H1 (cell line): ENCODE measurements at regions of chr22 and their contacts with region 1.

Region 1: GRCh38 chr22:17095538-17095937 is 10.7 kb downstream of the IL17RA start:
- DNase-seq: no peak
- H3K4me3 ChIP-seq: no peak overlapping the region
- H3K27ac ChIP-seq: no peak overlapping the region
- H3K4me1 ChIP-seq: 0 out of 7 replicates have a peak, but pooled peaks cover 0 to 2% (median 0%) of the 10 kb centered on the region in 4 experiments
- H3K27me3 ChIP-seq: no peaks in the 10 kb centered on the region
- CTCF ChIP-seq: peak; percentile 65 to 70 (median 68)
- EP300 ChIP-seq: no peak
- POLR2A ChIP-seq: no peak
- RAD21 ChIP-seq: peak; percentile 34 to 53; a peak in 3 of 4 replicates

Region 2: GRCh38 chr22:16989915-16990314 is 105.6 kb before region 1 on chr22:
- CTCF ChIA-PET with region 1: no interaction called
- POLR2A ChIA-PET with region 1: no interaction called
- DNase-seq: no peak
- H3K4me3 ChIP-seq: no peak overlapping the region
- H3K27ac ChIP-seq: no peak overlapping the region
- H3K4me1 ChIP-seq: no peaks in the 10 kb centered on the region
- H3K27me3 ChIP-seq: no peaks in the 10 kb centered on the region
- CTCF ChIP-seq: no peak
- EP300 ChIP-seq: no peak
- POLR2A ChIP-seq: no peak
- RAD21 ChIP-seq: no peak

Region 3: DNA sequence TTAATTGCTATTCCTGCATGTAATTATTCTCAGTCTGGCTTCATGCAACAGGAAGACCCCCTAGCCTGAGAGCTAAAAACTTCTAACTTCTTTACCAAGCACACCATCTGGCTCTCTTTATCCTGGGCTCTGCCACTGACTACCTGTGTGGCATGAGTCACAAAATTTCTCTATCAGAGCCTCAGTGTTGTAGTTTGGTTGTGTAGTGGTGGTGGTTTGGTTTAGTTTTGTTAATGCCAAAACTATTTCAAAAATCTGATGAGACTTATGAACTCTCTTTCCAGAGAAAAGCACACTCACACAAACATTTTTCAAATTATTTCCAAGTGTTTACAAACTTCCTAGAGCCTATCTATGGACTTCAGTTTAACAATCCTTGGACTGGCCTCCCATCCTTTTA is 18.3 kb before region 1 on chr22:
- CTCF ChIA-PET with region 1: interaction called, 17 read pairs
- POLR2A ChIA-PET with region 1: interaction called, 3 read pairs
- DNase-seq: no peak
- H3K4me3 ChIP-seq: no peak overlapping the region
- H3K27ac ChIP-seq: no peak overlapping the region
- H3K4me1 ChIP-seq: no peaks in the 10 kb centered on the region
- H3K27me3 ChIP-seq: no peaks in the 10 kb centered on the region
- CTCF ChIP-seq: no peak
- EP300 ChIP-seq: no peak
- POLR2A ChIP-seq: no peak
- RAD21 ChIP-seq: no peak

Region 4: GRCh38 chr22:17084554-17085276 is 10.8 kb before region 1 on chr22 and contains the start of gene IL17RA:
- CTCF ChIA-PET with region 1: interaction called, 17 read pairs
- POLR2A ChIA-PET with region 1: interaction called, 5 read pairs
- DNase-seq: peak; percentile 79 to 95
- H3K4me3 ChIP-seq: peak within 1 kb of the TSS; percentile 61 to 94 (median 68)
- H3K27ac ChIP-seq: no peak within 1 kb of the TSS; the same call in 1 of the 2 replicates
- H3K4me1 ChIP-seq: peaks cover 0 to 3% (median 2%) of the 10 kb centered on the region in 4 experiments; a peak in 4 of 7 replicates
- H3K27me3 ChIP-seq: peaks cover 9 to 32% (median 18%) of the 10 kb centered on the region in 4 experiments
- CTCF ChIP-seq: no peak; a peak in 1 of 4 replicates
- EP300 ChIP-seq: no peak
- POLR2A ChIP-seq: no peak
- RAD21 ChIP-seq: no peak
- total RNA-seq, gene IL17RA: 7.1 and 9.9 TPM in 2 replicates

Region 5: GRCh38 chr22:17106785-17107546 is 11.4 kb after region 1 on chr22:
- CTCF ChIA-PET with region 1: interaction called, 35 read pairs
- POLR2A ChIA-PET with region 1: interaction called, 3 read pairs
- DNase-seq: no peak
- H3K4me3 ChIP-seq: no peak overlapping the region
- H3K27ac ChIP-seq: no peak overlapping the region
- H3K4me1 ChIP-seq: no peaks in the 10 kb centered on the region
- H3K27me3 ChIP-seq: no peaks in the 10 kb centered on the region
- CTCF ChIP-seq: no peak
- EP300 ChIP-seq: no peak
- POLR2A ChIP-seq: no peak
- RAD21 ChIP-seq: no peak

Region 6: GRCh38 chr22:17120281-17120680 is 24.7 kb after region 1 on chr22:
- CTCF ChIA-PET with region 1: interaction called, 29 read pairs
- POLR2A ChIA-PET with region 1: interaction called, 3 read pairs
- DNase-seq: peak; percentile 46 to 93
- H3K4me3 ChIP-seq: peak overlapping the region; percentile 15 to 64 (median 24); a peak in 6 of 8 replicates
- H3K27ac ChIP-seq: no peak overlapping the region
- H3K4me1 ChIP-seq: peaks cover 4 to 17% (median 12%) of the 10 kb centered on the region in 4 experiments
- H3K27me3 ChIP-seq: peaks cover 0 to 4% (median 3%) of the 10 kb centered on the region in 4 experiments; a peak in 4 of 7 replicates
- CTCF ChIP-seq: peak in 2 of 3 experiments; percentile 11 to 21; a peak in 2 of 4 replicates
- EP300 ChIP-seq: no peak
- POLR2A ChIP-seq: no peak
- RAD21 ChIP-seq: no peak; a peak in 1 of 4 replicates